IMR-90 (cell line): ENCODE measurements at regions of chr7 and their contacts with region 1.

Region 1: DNA sequence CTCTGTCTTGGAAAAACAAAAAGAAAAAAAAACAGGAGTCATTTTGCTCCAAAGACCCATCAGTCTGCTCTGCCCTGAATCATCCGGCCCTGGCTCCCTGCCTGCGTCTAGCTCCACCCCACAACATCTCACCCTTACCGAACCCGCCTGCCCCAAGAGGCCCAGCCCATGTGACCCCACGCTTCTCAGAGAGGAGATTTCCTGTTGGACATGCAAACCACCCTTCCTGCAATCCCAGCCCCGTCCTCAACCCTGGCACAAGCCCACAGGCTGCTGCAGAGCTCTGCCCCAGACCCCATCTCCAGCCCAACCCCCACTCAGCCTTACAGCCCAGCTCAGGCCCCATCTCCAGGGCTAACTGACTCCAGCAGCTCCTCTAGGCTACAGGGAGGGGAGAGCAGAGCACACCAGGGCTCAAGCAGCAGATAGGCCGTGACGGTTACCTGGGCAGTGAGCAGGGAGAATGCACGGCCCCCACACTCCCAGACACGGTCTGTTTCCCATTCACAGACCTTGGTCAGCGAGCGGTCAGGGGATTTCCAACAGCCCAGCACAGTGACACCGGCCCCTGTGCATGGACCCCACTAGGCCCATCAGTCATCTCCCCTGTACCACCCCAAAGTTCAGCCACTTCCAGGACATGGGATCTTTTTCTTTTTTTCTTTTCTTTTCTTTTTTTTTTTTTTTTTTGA is 69.9 kb upstream of the GTF2I start:
- DNase-seq: peak; percentile 89
- ATAC-seq: peak; percentile 97
- H3K4me3 ChIP-seq: no peak overlapping the region
- H3K27ac ChIP-seq: peak overlapping the region; percentile 77
- H3K4me1 ChIP-seq: peaks cover 9% of the 10 kb centered on the region
- H3K27me3 ChIP-seq: no peaks in the 10 kb centered on the region
- CTCF ChIP-seq: no peak
- POLR2A ChIP-seq: no peak
- RAD21 ChIP-seq: no peak

Region 2: DNA sequence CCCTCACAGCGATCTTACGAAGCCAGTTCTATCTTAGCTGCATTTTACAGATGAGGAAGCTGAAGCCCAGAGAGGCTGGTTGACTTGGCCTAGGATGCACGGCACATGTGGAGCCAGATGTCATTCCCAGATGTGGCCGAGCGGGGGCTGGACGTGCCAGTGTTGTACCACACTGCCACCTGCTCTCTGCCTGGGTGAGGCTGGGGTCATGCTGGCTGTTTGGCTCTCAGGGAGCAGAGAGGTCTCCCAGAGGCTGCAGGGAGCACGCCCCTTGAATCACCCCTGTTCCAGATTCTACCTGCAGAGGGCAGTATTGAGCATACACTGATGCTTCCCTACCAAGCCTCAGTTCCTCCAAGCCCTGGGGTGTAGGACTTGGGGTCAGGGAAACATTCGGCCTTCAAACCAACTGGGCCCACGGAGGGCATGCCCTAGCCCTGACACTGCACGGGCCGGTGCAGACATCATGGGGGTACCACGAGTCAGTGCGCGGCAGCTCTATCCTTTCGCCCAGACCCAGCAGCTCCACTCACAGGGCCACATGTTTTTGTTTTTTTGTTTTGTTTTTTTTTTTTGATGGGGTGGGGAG is 137.7 kb before region 1 on chr7:
- CTCF ChIA-PET with region 1: no interaction called
- POLR2A ChIA-PET with region 1: no interaction called
- dilution Hi-C with region 1: no loop called
- in situ Hi-C with region 1: no loop called
- intact Hi-C with region 1: no loop called
- DNase-seq: peak; percentile 43
- ATAC-seq: peak; percentile 41
- H3K4me3 ChIP-seq: no peak overlapping the region
- H3K27ac ChIP-seq: no peak overlapping the region
- H3K4me1 ChIP-seq: peaks cover 10% of the 10 kb centered on the region
- H3K27me3 ChIP-seq: no peaks in the 10 kb centered on the region; the same call in 1 of the 2 replicates
- CTCF ChIP-seq: peak; percentile 68
- POLR2A ChIP-seq: no peak
- RAD21 ChIP-seq: peak; percentile 69

Region 3: DNA sequence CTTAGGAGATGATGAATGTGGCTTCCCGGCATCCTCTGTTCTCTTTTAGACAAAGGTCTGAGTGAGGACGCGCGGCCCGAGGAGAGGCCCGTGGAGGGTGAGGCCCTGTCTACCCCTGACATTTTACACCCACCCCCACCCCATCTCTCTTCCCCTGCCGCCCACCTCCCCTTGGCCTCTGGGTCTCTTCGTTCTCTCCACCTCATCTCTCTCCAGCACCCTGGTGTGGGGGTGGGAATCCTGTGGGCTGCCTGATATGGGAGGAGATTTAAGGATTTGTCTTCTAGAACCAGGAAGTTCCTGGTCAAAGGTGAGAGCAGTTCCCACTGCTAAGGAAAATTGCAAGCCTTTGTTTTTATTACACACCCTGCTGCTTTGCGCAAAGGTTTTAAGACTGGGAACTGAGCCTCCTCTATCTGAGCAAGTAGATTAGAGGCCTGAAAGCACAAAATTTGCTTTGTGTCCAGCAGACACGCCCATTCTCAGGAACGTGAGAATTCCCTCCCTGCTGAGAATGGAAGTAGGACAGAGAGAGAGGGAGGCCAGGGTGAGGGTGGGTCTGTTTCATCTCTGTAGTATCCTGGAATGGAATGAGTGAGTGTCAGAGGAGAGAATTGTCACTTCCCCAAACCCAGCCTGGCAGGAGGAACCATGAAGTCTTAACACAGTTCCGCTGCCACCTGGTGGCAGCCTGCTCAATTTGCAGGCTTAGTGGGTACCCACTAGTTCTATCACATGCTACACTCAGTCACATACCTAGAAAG is 42.7 kb before region 1 on chr7:
- CTCF ChIA-PET with region 1: interaction called, 3 read pairs
- POLR2A ChIA-PET with region 1: interaction called, 11 read pairs
- dilution Hi-C with region 1: no loop called
- in situ Hi-C with region 1: no loop called
- intact Hi-C with region 1: no loop called
- DNase-seq: peak; percentile 64
- ATAC-seq: peak; percentile 88
- H3K4me3 ChIP-seq: no peak overlapping the region
- H3K27ac ChIP-seq: no peak overlapping the region
- H3K4me1 ChIP-seq: no peaks in the 10 kb centered on the region
- H3K27me3 ChIP-seq: no peaks in the 10 kb centered on the region
- CTCF ChIP-seq: peak; percentile 67
- POLR2A ChIP-seq: no peak
- RAD21 ChIP-seq: peak; percentile 70

Region 4: DNA sequence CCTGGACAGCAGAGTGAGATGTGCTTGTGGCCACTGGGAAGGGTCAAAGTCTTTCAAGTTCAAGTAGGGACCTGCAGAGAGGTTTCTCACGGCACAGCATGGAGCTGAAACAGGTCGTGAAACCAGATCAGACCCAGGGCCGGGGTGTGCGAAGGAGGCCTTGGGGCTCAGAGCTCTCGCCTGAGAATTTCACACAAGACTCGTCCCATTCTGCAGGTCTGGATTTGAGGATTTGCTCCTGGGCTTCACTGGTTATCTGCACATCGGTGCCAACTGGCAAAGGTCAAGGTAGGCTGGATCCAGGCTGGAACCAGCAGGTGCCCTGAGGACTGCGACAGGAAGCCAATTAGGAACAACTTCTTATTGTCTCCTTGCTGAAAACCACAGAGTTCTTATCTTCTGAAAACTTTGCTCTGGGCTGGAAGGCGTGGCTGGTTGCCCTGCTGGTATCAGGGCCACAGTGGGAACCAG is 45.9 kb after region 1 on chr7:
- CTCF ChIA-PET with region 1: no interaction called
- POLR2A ChIA-PET with region 1: no interaction called
- dilution Hi-C with region 1: no loop called
- in situ Hi-C with region 1: no loop called
- intact Hi-C with region 1: no loop called
- DNase-seq: no peak
- ATAC-seq: no peak
- H3K4me3 ChIP-seq: no peak overlapping the region
- H3K27ac ChIP-seq: no peak overlapping the region
- H3K4me1 ChIP-seq: peaks cover 4% of the 10 kb centered on the region
- H3K27me3 ChIP-seq: no peaks in the 10 kb centered on the region
- CTCF ChIP-seq: no peak
- POLR2A ChIP-seq: no peak
- RAD21 ChIP-seq: no peak

Region 5: GRCh38 chr7:74665296-74665938 is 77.8 kb after region 1 on chr7:
- CTCF ChIA-PET with region 1: no interaction called
- POLR2A ChIA-PET with region 1: no interaction called
- dilution Hi-C with region 1: no loop called
- in situ Hi-C with region 1: loop called (anchors 10 kb)
- intact Hi-C with region 1: loop called (anchors 10 kb)
- DNase-seq: no peak
- ATAC-seq: no peak
- H3K4me3 ChIP-seq: no peak overlapping the region
- H3K27ac ChIP-seq: no peak overlapping the region
- H3K4me1 ChIP-seq: peaks cover 16% of the 10 kb centered on the region
- H3K27me3 ChIP-seq: no peaks in the 10 kb centered on the region
- CTCF ChIP-seq: no peak
- POLR2A ChIP-seq: no peak
- RAD21 ChIP-seq: no peak